ENCODE measurements at regions of chr12 and their contacts with region 1.

Region 1: GRCh38 chr12:49244176-49244575 is 20.7 kb upstream of the TUBA1C start:
- DNase-seq: peak; percentile 82
- ATAC-seq: peak; percentile 84
- H3K4me3 ChIP-seq: no peak overlapping the region
- H3K27ac ChIP-seq: peak overlapping the region; percentile 92; the same call in 1 of the 2 replicates
- H3K4me1 ChIP-seq: peaks cover 12% of the 10 kb centered on the region
- H3K27me3 ChIP-seq: no peaks in the 10 kb centered on the region
- CTCF ChIP-seq: no peak
- POLR2A ChIP-seq: no peak
- RAD21 ChIP-seq: no peak

Region 2: DNA sequence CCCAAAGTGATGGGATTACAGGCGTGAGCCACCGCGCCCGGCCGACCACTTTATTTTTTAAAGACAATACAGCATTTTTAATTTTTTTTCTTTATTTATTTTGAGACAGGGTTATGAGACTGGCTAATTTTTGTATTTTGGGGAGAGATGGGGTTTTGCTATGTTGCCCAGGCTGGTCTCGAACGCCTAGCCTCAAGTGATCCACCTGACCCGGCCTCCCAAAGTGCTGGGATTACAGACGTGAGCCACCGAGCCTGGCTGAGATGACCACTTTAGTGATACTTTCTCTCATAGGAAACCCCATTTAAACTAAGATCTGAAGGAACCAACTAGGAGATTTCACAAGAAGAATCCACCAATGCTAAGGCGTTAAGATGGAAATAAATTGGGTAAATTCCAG is 173.2 kb before region 1 on chr12:
- CTCF ChIA-PET with region 1: no interaction called
- POLR2A ChIA-PET with region 1: no interaction called
- dilution Hi-C with region 1: no loop called
- in situ Hi-C with region 1: no loop called
- intact Hi-C with region 1: no loop called
- DNase-seq: no peak
- ATAC-seq: no peak
- H3K4me3 ChIP-seq: no peak overlapping the region
- H3K27ac ChIP-seq: no peak overlapping the region
- H3K4me1 ChIP-seq: no peaks in the 10 kb centered on the region; the same call in 1 of the 2 replicates
- H3K27me3 ChIP-seq: no peaks in the 10 kb centered on the region
- CTCF ChIP-seq: no peak
- POLR2A ChIP-seq: no peak
- RAD21 ChIP-seq: no peak

Region 3: GRCh38 chr12:49279706-49280159 is 35.6 kb after region 1 on chr12:
- CTCF ChIA-PET with region 1: no interaction called
- POLR2A ChIA-PET with region 1: no interaction called
- dilution Hi-C with region 1: no loop called
- in situ Hi-C with region 1: no loop called
- intact Hi-C with region 1: no loop called
- DNase-seq: no peak
- ATAC-seq: no peak
- H3K4me3 ChIP-seq: no peak overlapping the region
- H3K27ac ChIP-seq: no peak overlapping the region
- H3K4me1 ChIP-seq: no peaks in the 10 kb centered on the region
- H3K27me3 ChIP-seq: peaks cover 4% of the 10 kb centered on the region; the same call in 1 of the 2 replicates
- CTCF ChIP-seq: no peak
- POLR2A ChIP-seq: no peak
- RAD21 ChIP-seq: no peak

Region 4: DNA sequence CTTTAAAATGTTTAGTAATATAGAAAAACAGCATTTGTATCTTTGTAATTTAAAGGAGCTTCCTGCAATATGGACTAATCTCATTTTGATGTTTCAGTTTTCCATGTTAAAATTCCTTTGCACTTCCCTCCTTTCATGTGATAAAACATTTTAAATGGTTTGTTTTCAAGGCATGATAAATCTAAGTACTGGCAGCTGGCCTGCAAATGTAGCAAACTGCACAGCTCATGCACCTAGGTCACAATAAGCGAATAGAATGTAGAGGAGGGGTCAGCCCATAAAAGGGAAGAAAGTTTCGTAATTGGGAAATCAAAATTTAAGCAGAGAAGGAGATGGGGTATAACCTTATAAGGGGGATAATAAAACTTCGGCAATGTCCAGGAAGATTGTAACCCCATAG is 214.6 kb after region 1 on chr12:
- CTCF ChIA-PET with region 1: no interaction called
- POLR2A ChIA-PET with region 1: interaction called, 16 read pairs
- dilution Hi-C with region 1: no loop called
- in situ Hi-C with region 1: no loop called
- intact Hi-C with region 1: no loop called
- DNase-seq: no peak
- ATAC-seq: no peak
- H3K4me3 ChIP-seq: no peak overlapping the region
- H3K27ac ChIP-seq: no peak overlapping the region
- H3K4me1 ChIP-seq: no peaks in the 10 kb centered on the region
- H3K27me3 ChIP-seq: no peaks in the 10 kb centered on the region
- CTCF ChIP-seq: no peak
- POLR2A ChIP-seq: no peak
- RAD21 ChIP-seq: no peak